ENCODE measurements at regions of chr18 and their contacts with region 1.

Region 1: GRCh38 chr18:63823518-63824219 is 48.5 kb downstream of the SERPINB7 start:
- DNase-seq: peak; percentile 69
- ATAC-seq: no peak
- H3K4me3 Mint-ChIP-seq: no peak overlapping the region
- H3K27ac Mint-ChIP-seq: no peak overlapping the region
- H3K4me1 Mint-ChIP-seq: no peaks in the 10 kb centered on the region
- H3K27me3 Mint-ChIP-seq: peaks cover 7% of the 10 kb centered on the region

Region 2: DNA sequence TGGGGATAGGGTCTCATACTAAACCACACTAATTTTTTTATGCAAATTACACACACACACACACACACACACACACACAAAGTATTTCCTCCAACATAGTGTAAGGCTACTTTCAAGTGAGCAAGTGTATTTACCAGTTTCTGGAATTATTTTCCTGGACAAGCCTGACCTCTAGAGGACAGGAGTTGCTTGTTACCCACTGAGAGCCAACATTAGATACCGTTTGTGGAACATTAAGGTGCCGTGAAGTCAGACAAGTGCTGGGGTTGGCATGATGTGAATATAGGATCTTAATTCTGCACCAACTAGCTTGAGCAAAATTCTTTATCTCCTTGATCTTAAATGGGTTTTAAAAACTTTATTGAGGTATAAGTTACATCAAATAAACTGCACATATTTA is 24.5 kb after region 1 on chr18:
- CTCF ChIA-PET with region 1: interaction called, 3 read pairs
- POLR2A ChIA-PET with region 1: no interaction called
- intact Hi-C with region 1: loop called in 1 of 2 experiments (anchors 2 kb)
- DNase-seq: no peak
- ATAC-seq: peak; percentile 39
- H3K4me3 Mint-ChIP-seq: no peak overlapping the region
- H3K27ac Mint-ChIP-seq: no peak overlapping the region
- H3K4me1 Mint-ChIP-seq: no peaks in the 10 kb centered on the region
- H3K27me3 Mint-ChIP-seq: peaks cover 15% of the 10 kb centered on the region

Region 3: GRCh38 chr18:63894106-63894772 is 70.6 kb after region 1 on chr18:
- CTCF ChIA-PET with region 1: no interaction called
- POLR2A ChIA-PET with region 1: no interaction called
- intact Hi-C with region 1: no loop called
- DNase-seq: no peak
- ATAC-seq: no peak
- H3K4me3 Mint-ChIP-seq: no peak overlapping the region
- H3K27ac Mint-ChIP-seq: no peak overlapping the region
- H3K4me1 Mint-ChIP-seq: no peaks in the 10 kb centered on the region
- H3K27me3 Mint-ChIP-seq: peaks cover 17% of the 10 kb centered on the region

Measured in activated CD4-positive, alpha-beta T cell treated with anti-CD3 and anti-CD28 coated beads for 36 hours (primary cell).